ENCODE measurements at regions of chr19 and their contacts with region 1.

Region 1: GRCh38 chr19:16928916-16929315 is 40.1 kb downstream of the F2RL3 start:
- DNase-seq: peak in 1 of 2 donors; percentile 17
- H3K4me3 ChIP-seq: no peak overlapping the region
- H3K27ac ChIP-seq: no peak overlapping the region
- H3K4me1 ChIP-seq: no peaks in the 10 kb centered on the region
- H3K27me3 ChIP-seq: no peaks in the 10 kb centered on the region
- CTCF ChIP-seq: no peak
- POLR2A ChIP-seq: no peak

Region 2: DNA sequence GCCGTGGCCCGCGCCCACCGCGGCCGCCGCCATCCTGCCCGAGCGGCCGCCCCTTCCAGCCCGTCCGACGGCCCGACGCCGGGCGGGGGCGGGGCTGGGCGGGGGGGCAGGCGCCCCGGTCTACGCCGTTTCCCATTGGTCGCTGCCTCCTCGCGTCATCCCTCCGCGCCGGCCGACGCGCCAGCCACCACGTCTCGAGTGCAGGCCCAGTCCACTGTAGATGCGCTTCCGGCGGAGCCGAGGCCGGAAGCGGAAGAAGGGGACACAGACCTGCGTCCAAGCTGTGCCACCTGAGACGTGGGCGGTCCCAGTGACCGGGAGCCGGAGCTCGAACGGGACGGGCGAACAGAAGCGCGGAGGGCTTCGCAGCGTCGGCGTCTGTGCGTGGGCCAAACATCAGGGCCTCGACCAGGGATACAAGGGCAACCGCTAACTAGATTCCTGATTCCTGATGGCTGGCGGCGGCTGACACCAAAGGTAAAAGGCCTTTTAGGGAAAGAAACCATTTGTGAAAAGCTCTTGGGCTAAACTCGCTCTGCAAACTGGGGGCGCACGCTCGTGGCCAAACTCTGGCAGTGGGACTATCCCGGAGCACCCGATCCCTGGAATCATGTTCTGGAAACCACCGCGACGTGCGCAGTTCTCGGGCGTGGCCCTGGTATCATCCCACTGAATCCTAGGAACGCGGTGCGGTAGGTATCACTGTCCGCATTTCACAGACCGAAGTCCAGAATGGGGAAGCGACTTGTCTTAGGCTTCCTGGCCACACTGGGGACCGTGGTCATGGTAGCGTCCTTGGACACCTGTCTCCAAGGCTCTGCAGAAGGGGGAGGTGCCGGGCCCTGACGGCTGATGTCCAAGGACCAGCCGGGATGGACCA is 356.3 kb before region 1 on chr19 and contains the start of gene SLC35E1:
- intact Hi-C with region 1: no loop called
- DNase-seq: peak; percentile 96 to 97
- H3K4me3 ChIP-seq: peak within 1 kb of the TSS; percentile 80 to 94 (median 84)
- H3K27ac ChIP-seq: peak within 1 kb of the TSS; percentile 90 to 92
- H3K4me1 ChIP-seq: peaks cover 4 to 26% of the 10 kb centered on the region in 2 donors
- H3K27me3 ChIP-seq: no peaks in the 10 kb centered on the region
- CTCF ChIP-seq: no peak
- POLR2A ChIP-seq: peak; percentile 67
- total RNA-seq, gene SLC35E1: 33.0 to 44.9 (median 39.2) TPM

Region 3: DNA sequence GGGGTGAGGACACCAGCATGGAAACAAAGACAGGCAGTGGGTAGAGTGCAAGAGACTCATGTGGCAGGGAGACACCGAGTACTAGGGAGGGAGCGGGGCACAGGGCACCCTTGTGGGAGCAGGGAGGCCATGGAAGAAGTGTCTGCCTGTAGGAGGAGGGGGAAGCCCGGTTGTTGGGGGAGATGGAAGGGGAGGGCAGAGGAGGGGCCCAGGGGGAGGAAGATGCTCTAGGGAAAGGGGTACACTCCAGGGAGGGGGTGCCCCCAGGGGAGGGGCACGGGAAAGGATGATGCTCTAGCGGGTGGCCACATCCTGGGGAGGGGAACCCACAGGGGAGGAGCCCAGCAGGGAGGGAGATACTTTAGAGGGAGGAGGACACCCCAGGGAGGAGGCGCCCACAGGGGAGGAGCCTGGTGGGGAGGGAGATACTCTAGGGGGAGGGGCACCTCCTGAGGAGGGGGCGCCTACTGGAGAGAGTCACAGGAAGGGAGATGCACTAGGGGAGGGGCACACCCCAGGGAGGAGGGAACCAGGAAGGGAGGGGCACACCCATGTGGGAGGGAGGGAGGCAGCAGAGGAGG is 72.8 kb after region 1 on chr19:
- intact Hi-C with region 1: loop called (anchors 2 kb)
- DNase-seq: no peak
- H3K4me3 ChIP-seq: no peak overlapping the region
- H3K27ac ChIP-seq: no peak overlapping the region
- H3K4me1 ChIP-seq: no peaks in the 10 kb centered on the region
- H3K27me3 ChIP-seq: no peaks in the 10 kb centered on the region
- CTCF ChIP-seq: no peak
- POLR2A ChIP-seq: no peak

Region 4: DNA sequence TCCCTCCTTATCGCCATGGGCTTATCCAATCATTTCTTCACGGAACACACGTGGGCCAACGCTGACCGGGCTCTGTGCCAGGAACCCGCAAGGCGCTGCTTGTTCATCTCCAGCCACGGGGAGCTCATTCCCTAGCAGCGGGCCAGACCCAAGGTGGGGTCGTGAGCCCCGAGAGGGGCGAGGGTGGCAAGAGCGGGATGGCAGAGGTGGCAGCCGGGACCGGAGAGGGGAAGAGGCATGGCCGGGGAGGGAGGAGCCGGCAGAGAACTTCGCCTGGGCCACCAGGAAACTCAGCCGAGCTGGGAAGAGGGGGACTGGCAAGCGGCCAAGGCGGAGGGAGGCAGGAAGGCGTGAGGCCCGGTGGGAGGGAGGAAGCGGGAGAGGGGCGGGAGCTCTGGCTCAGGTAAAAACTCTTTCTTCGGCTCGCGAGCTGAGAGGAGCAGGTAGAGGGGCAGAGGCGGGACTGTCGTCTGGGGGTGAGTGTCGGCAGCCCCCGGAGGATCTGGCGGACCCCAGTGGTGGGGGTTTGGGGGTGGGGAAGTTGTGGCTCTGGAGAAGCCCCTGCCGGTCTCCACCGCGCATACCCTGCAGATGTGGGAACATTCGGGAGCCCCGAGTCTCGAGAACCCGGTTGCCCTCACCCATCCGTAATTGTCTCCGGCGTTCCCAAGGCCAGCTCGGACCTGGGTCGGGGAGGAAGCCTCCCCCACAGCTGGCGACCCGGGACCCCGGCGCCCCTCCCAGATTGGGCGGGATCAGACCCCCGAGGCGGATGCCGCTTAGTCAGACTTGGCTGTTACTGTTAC is 866.0 kb after region 1 on chr19 and contains the start of gene B3GNT3:
- intact Hi-C with region 1: no loop called
- DNase-seq: peak in 1 of 2 donors; percentile 24
- H3K4me3 ChIP-seq: peak within 1 kb of the TSS; percentile 10 to 59 (median 44)
- H3K27ac ChIP-seq: peak within 1 kb of the TSS; percentile 55 to 59
- H3K4me1 ChIP-seq: no peaks in the 10 kb centered on the region
- H3K27me3 ChIP-seq: peaks cover 0 to 20% of the 10 kb centered on the region in 2 donors
- CTCF ChIP-seq: no peak
- POLR2A ChIP-seq: no peak
- total RNA-seq, gene B3GNT3: 0.32 to 6.9 (median 2.0) TPM